ENCODE measurements at regions of chr11 and their contacts with region 1.

Region 1: GRCh38 chr11:72793425-72794367 is at the start of gene STARD10:
- DNase-seq: peak; percentile 93
- H3K4me3 Mint-ChIP-seq: peak within 1 kb of the TSS; percentile 92
- H3K27ac Mint-ChIP-seq: peak within 1 kb of the TSS; percentile 98
- H3K4me1 Mint-ChIP-seq: peaks cover 25% of the 10 kb centered on the region
- H3K27me3 Mint-ChIP-seq: no peaks in the 10 kb centered on the region
- total RNA-seq, gene STARD10: 4.5 to 6.4 TPM

Region 2: DNA sequence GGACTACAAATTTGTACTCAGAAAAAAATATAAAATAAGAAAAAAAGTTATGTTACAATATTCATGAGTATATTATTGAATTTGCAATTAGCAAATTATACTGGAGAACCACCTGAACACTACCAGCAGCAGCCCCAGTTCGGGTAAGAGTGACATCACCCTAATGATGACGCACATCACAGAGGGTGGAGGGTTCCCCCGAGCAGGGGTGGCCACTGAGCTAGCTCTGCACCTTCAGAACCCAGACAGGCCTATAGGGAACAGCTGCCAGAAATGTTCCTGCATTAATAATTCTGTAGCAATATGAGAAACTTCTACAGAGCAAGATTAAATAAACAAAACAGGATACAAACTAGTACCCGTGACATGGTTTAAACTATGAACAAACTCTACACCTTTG is 24.0 kb before region 1 on chr11:
- CTCF ChIA-PET with region 1: interaction called, 10 read pairs
- POLR2A ChIA-PET with region 1: no interaction called
- DNase-seq: no peak
- H3K4me3 Mint-ChIP-seq: no peak overlapping the region
- H3K27ac Mint-ChIP-seq: no peak overlapping the region
- H3K4me1 Mint-ChIP-seq: no peaks in the 10 kb centered on the region
- H3K27me3 Mint-ChIP-seq: no peaks in the 10 kb centered on the region

Region 3: GRCh38 chr11:72781313-72782050 is 12.2 kb before region 1 on chr11:
- CTCF ChIA-PET with region 1: interaction called, 29 read pairs
- POLR2A ChIA-PET with region 1: no interaction called
- DNase-seq: peak; percentile 40
- H3K4me3 Mint-ChIP-seq: peak overlapping the region; percentile 70
- H3K27ac Mint-ChIP-seq: no peak overlapping the region
- H3K4me1 Mint-ChIP-seq: peaks cover 13% of the 10 kb centered on the region
- H3K27me3 Mint-ChIP-seq: peaks cover 3% of the 10 kb centered on the region

Region 4: DNA sequence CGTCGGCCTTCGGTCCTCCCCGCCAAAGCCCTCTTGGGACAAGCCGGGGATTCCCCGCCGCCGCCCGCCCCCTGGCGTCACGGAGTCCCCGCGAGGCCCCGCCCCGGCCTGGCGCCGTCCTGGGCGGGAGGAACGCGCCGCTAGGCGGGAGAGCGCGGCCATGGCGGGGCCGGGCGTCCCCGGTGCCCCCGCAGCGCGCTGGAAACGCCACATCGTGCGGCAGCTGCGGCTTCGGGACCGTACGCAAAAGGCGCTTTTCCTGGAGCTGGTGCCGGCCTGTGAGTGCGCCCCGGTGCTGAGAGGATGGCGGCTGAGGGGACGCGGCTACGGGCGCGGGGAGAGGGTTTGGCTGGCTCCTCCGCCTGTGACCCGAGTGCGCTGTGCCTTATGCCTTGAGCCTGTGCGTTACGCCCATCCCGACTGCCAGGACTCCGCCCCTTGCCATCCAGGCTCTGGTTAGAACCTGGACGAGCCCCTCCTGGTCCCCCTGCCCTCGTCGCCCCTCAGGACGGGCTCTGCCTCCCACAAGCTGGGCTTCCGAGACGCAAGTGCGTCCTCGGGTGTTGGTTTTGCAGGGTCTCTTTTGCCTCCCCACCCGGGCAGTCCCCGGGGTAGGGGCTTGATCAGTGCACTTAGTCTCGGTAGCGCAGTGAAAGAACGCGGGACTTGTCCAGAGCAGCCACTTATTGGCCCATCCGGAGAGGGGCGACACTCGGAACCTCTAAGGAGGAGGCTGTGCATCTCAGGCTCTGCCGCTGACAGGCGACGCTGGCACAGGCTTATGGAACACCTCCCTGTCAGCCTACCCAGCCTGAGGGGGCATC is 20.8 kb after region 1 on chr11 and contains the start of gene ATG16L2:
- CTCF ChIA-PET with region 1: interaction called, 52 read pairs
- POLR2A ChIA-PET with region 1: interaction called, 5 read pairs
- DNase-seq: peak; percentile 88
- H3K4me3 Mint-ChIP-seq: peak within 1 kb of the TSS; percentile 100
- H3K27ac Mint-ChIP-seq: peak within 1 kb of the TSS; percentile 99
- H3K4me1 Mint-ChIP-seq: peaks cover 52% of the 10 kb centered on the region
- H3K27me3 Mint-ChIP-seq: no peaks in the 10 kb centered on the region
- total RNA-seq, gene ATG16L2: 108 to 113 TPM